ENCODE measurements at regions of chr2 and their contacts with region 1.

Region 1: GRCh38 chr2:169928463-169928864 is 101.2 kb downstream of the UBR3 start:
- DNase-seq: no peak
- ATAC-seq: peak; percentile 50 to 78 (median 74)
- H3K4me3 ChIP-seq: no peak overlapping the region
- H3K27ac ChIP-seq: no peak overlapping the region
- H3K4me1 ChIP-seq: no peaks in the 10 kb centered on the region
- H3K27me3 ChIP-seq: no peaks in the 10 kb centered on the region
- CTCF ChIP-seq: peak; percentile 14 to 72 (median 60)

Region 2: GRCh38 chr2:169824373-169825333 is 103.8 kb before region 1 on chr2 and contains the start of gene METTL5:
- intact Hi-C with region 1: loop called in 1 of 3 experiments (anchors 5 kb)
- DNase-seq: peak; percentile 69 to 93 (median 82)
- ATAC-seq: peak; percentile 78 to 88 (median 84)
- H3K4me3 ChIP-seq: peak within 1 kb of the TSS; percentile 69 to 88 (median 71)
- H3K27ac ChIP-seq: peak within 1 kb of the TSS; percentile 35 to 78 (median 60)
- H3K4me1 ChIP-seq: peaks cover 7 to 31% (median 16%) of the 10 kb centered on the region in 3 donors
- H3K27me3 ChIP-seq: no peaks in the 10 kb centered on the region
- CTCF ChIP-seq: peak; percentile 78 to 94 (median 88)
- total RNA-seq, gene METTL5: 29.7 to 35.6 (median 32.9) TPM